Transverse colon (tissue), 4 donors: ENCODE measurements at regions of chr21 and their contacts with region 1.

Region 1: GRCh38 chr21:28699596-28700259 is 292.9 kb downstream of the LTN1 start:
- DNase-seq: no peak
- H3K4me3 ChIP-seq: no peak overlapping the region
- H3K27ac ChIP-seq: no peak overlapping the region
- H3K4me1 ChIP-seq: no peaks in the 10 kb centered on the region
- H3K27me3 ChIP-seq: no peaks in the 10 kb centered on the region
- CTCF ChIP-seq: no peak
- EP300 ChIP-seq: no peak
- POLR2A ChIP-seq: no peak

Region 2: DNA sequence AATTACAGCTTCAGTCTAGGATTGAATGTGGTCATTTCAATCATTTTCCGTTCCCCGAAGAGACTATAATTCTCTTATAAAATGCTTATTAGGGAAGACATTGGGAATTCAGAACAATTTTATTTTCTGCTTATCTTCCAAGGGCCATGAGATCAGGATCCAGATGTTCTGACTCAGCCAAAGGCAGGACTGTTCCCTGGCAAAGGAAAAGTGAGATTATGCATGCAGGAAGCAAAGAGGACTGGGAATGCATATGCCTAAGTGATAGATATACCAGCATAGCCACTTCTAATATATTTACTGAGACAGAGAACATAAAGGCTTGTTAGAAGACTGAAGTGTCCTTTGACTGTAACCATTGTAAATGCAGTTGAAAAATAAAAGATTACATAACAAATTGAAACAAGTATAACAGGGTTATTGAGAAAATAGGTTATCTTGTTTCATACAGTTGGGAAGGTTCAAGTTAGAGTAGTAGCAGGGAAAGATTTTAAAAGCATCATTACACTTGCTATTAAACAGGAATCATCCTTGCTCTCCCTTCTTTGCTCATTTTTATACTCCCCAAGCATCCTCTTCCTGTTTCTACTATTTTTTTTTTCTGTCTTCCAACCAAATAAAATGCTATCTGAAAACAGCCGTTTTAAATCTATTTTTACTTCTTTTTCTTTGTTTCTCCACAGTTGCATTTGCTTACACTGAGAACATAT is 1293.3 kb before region 1 on chr21:
- in situ Hi-C with region 1: no loop called
- intact Hi-C with region 1: no loop called
- DNase-seq: no peak
- H3K4me3 ChIP-seq: no peak overlapping the region
- H3K27ac ChIP-seq: no peak overlapping the region
- H3K4me1 ChIP-seq: peaks cover 0 to 22% (median 5%) of the 10 kb centered on the region in 4 donors
- H3K27me3 ChIP-seq: no peaks in the 10 kb centered on the region
- CTCF ChIP-seq: no peak
- EP300 ChIP-seq: no peak
- POLR2A ChIP-seq: no peak

Region 3: DNA sequence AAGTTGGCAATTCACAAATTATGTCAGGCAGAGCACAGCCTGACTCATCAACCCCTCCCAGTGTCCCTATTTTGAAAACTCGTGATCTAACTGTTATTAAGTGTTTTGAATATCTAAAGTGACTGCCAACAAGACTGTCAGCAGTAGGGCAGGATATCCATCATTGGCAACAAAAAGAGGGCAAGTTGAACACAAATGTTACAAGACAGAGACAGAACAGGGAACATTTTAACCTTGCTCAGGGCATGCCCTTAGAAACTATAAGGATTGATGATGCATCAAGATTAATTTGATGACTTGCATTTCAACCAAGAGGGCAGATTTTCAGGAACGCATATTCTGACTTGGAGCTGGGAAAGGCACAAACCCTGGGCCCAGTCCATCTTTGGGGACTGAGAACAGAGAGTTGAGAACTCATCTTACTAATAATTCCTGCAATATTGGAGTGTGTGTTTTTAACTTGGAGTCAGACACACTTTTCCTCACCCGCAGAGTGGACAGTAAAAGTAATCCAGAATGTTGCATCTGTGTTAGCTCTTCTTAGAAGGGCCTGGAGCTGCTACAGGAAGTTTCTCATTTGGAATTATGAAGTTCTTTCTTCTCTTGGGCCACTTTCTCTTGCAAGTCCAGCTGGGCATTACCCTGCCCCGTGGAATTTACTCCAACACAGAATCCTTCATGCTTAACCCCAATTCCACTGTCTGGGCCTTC is 24.2 kb before region 1 on chr21:
- in situ Hi-C with region 1: no loop called
- intact Hi-C with region 1: loop called (anchors 2 kb)
- DNase-seq: no peak
- H3K4me3 ChIP-seq: no peak overlapping the region
- H3K27ac ChIP-seq: peak overlapping the region in 1 of 4 donors; percentile 52
- H3K4me1 ChIP-seq: no peaks in the 10 kb centered on the region
- H3K27me3 ChIP-seq: no peaks in the 10 kb centered on the region
- CTCF ChIP-seq: no peak
- EP300 ChIP-seq: no peak
- POLR2A ChIP-seq: no peak

Region 4: DNA sequence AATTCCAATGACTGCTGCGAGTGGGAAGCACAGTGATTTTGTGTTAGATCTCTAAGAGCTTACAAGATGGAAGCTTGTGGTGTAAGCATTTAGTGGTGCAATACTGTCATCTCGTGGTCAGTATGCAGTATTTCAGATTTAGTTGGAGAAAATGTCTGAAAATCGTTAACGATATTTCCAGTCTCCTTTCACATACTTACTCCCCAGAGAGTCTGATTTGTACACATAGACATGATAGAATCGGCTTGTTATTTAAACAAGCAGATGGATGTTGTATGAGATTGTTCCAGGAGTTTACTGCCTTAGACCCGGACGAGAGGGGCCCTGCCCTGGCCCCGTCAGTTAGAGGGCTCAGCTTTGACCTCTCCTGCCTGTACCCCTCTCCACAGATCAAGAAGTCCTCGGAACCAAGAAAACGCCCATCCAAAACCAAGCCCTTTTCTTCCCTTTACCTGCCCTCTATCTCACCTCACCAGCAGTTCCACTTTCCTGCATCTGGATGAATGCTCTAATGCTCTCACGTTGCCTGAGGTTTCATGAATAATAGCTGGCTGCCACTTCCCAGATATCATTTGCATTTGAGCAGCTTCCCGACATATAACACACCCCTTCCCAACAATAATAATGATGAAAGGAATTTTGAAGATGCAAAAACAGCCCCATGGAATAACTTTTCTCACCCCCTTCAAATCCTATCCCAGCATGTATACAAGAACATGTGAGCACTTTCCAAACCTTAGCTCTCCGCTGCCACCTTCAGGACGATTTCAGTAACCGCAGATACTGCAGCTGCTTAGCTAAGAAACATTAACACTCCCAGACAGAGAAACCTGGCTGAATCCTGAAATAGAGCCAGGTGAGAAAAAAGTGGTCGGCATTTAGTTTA is 45.6 kb after region 1 on chr21:
- in situ Hi-C with region 1: no loop called
- intact Hi-C with region 1: no loop called
- DNase-seq: peak; percentile 78
- H3K4me3 ChIP-seq: peak overlapping the region; percentile 17 to 58 (median 36)
- H3K27ac ChIP-seq: peak overlapping the region; percentile 48 to 70 (median 62)
- H3K4me1 ChIP-seq: peaks cover 0 to 9% (median 2%) of the 10 kb centered on the region in 4 donors
- H3K27me3 ChIP-seq: no peaks in the 10 kb centered on the region
- CTCF ChIP-seq: peak; percentile 88 to 99 (median 93)
- EP300 ChIP-seq: no peak
- POLR2A ChIP-seq: no peak

Region 5: GRCh38 chr21:28884976-28885852 is 185.5 kb after region 1 on chr21:
- in situ Hi-C with region 1: no loop called
- intact Hi-C with region 1: no loop called
- DNase-seq: peak; percentile 90
- H3K4me3 ChIP-seq: peak overlapping the region; percentile 48 to 66 (median 56)
- H3K27ac ChIP-seq: peak overlapping the region; percentile 90 to 96 (median 92)
- H3K4me1 ChIP-seq: peaks cover 0 to 16% (median 9%) of the 10 kb centered on the region in 4 donors
- H3K27me3 ChIP-seq: peaks cover 3% of the 10 kb centered on the region
- CTCF ChIP-seq: no peak
- EP300 ChIP-seq: no peak
- POLR2A ChIP-seq: peak; percentile 74

Region 6: GRCh38 chr21:30552782-30553181 is 1853.1 kb after region 1 on chr21:
- in situ Hi-C with region 1: no loop called
- intact Hi-C with region 1: no loop called
- DNase-seq: no peak
- H3K4me3 ChIP-seq: no peak overlapping the region
- H3K27ac ChIP-seq: no peak overlapping the region
- H3K4me1 ChIP-seq: no peaks in the 10 kb centered on the region
- H3K27me3 ChIP-seq: no peaks in the 10 kb centered on the region
- CTCF ChIP-seq: no peak
- EP300 ChIP-seq: no peak
- POLR2A ChIP-seq: no peak